ENCODE measurements at regions of chr6 and their contacts with region 1.

Region 1: DNA sequence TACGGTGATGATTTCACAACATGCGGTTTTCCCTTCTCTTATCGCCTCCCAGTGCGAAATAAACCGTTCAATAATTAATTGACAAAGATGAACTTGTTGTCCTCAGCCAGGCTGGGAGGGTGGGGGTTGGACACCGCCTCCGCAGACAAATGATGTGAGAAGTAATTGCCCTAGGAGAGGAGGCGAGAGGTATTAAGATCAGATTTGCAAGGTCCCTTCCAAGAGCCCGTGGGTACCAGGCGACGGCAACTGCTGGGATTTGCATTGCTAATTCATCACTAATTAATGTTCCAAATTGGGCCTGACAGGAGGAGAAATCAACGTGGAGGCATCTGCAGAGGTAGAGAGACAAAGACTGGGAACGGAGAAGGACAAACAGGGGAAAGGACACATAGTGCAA is 90.2 kb upstream of the CCDC167 start:
- DNase-seq: no peak
- H3K4me3 Mint-ChIP-seq: no peak overlapping the region
- H3K27ac Mint-ChIP-seq: no peak overlapping the region
- H3K4me1 Mint-ChIP-seq: no peaks in the 10 kb centered on the region
- H3K27me3 Mint-ChIP-seq: peaks cover 1% of the 10 kb centered on the region

Region 2: GRCh38 chr6:37550191-37550965 is 39.6 kb before region 1 on chr6:
- intact Hi-C with region 1: no loop called
- DNase-seq: no peak
- H3K4me3 Mint-ChIP-seq: no peak overlapping the region
- H3K27ac Mint-ChIP-seq: no peak overlapping the region
- H3K4me1 Mint-ChIP-seq: peaks cover 27% of the 10 kb centered on the region
- H3K27me3 Mint-ChIP-seq: no peaks in the 10 kb centered on the region

Region 3: DNA sequence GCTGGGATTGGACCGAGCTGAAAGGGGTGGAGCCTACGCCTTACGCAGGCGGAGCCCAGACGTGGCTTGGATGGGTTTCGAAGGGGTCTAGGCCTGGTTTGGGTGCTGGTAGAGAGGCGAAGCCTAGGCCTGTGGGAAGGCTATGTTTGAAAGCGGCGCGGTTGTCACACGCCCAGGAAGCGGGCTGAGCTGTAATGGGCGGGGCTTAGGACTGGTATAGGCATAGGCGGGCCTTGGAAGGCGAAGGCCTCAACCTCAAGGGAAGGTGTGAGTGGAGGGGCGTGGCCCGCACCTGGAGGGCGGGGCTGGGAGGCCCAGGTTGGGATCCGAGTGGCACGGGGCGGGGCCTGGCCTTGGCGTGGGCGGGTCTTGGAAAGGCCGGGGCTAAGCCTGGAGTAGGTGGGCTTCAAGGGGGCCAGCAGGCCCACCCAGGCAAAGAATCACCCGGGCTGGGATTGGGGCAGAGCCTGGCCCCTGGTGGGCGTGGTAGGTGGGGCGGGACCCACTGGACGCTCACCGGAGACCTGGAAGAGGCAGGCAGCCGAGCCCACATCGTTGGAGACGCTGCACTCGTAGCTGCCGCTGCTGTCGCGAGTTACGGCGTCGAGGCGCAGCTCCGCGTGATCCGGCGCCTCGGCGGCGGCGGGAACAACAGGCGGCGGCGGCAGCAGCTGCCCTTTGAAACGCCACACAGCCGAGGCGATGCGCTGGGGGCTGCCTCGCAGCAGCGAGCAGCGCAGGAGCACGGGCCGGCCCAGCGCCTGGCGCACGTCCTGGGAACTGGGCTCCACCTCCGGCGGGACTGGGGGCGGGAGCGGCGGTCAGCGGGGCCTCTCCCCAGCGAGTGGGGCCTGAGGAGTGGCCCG is 58.8 kb after region 1 on chr6:
- intact Hi-C with region 1: loop called (anchors 10 kb)
- DNase-seq: peak; percentile 83
- H3K4me3 Mint-ChIP-seq: peak overlapping the region; percentile 12
- H3K27ac Mint-ChIP-seq: no peak overlapping the region
- H3K4me1 Mint-ChIP-seq: peaks cover 22% of the 10 kb centered on the region
- H3K27me3 Mint-ChIP-seq: peaks cover 18% of the 10 kb centered on the region

Region 4: GRCh38 chr6:37741757-37742400 is 151.9 kb after region 1 on chr6:
- intact Hi-C with region 1: no loop called
- DNase-seq: no peak
- H3K4me3 Mint-ChIP-seq: no peak overlapping the region
- H3K27ac Mint-ChIP-seq: no peak overlapping the region
- H3K4me1 Mint-ChIP-seq: no peaks in the 10 kb centered on the region
- H3K27me3 Mint-ChIP-seq: peaks cover 33% of the 10 kb centered on the region

Measured in activated CD4-positive, alpha-beta T cell treated with anti-CD3 and anti-CD28 coated beads, Interleukin-2, amount 10 ng/mL, durations not matched to agents 24 days and 14 days (primary cell).